PC-3 (cell line): ENCODE measurements at regions of chr5 and their contacts with region 1.

Region 1: GRCh38 chr5:144072518-144072927 is 97.9 kb downstream of the YIPF5 start:
- DNase-seq: peak; percentile 84
- ATAC-seq: peak; percentile 92
- H3K4me3 ChIP-seq: no peak overlapping the region
- H3K27ac ChIP-seq: peak overlapping the region; percentile 87
- H3K4me1 ChIP-seq: peaks cover 17% of the 10 kb centered on the region
- H3K27me3 ChIP-seq: no peaks in the 10 kb centered on the region
- CTCF ChIP-seq: no peak

Region 2: GRCh38 chr5:143923634-143924255 is 148.8 kb before region 1 on chr5:
- CTCF ChIA-PET with region 1: no interaction called
- POLR2A ChIA-PET with region 1: no interaction called
- intact Hi-C with region 1: loop called (anchors 5 kb)
- DNase-seq: peak; percentile 60
- ATAC-seq: peak; percentile 72
- H3K4me3 ChIP-seq: peak overlapping the region; percentile 43; the same call in 1 of the 2 replicates
- H3K27ac ChIP-seq: peak overlapping the region; percentile 95
- H3K4me1 ChIP-seq: peaks cover 53% of the 10 kb centered on the region
- H3K27me3 ChIP-seq: no peaks in the 10 kb centered on the region
- CTCF ChIP-seq: no peak

Region 3: GRCh38 chr5:143979044-143979690 is 93.4 kb before region 1 on chr5:
- CTCF ChIA-PET with region 1: no interaction called
- POLR2A ChIA-PET with region 1: interaction called, 4 read pairs
- intact Hi-C with region 1: loop called (anchors 2 kb)
- DNase-seq: peak; percentile 26
- ATAC-seq: no peak
- H3K4me3 ChIP-seq: no peak overlapping the region
- H3K27ac ChIP-seq: no peak overlapping the region
- H3K4me1 ChIP-seq: peaks cover 33% of the 10 kb centered on the region
- H3K27me3 ChIP-seq: no peaks in the 10 kb centered on the region
- CTCF ChIP-seq: no peak

Region 4: GRCh38 chr5:144040615-144041305 is 31.8 kb before region 1 on chr5:
- CTCF ChIA-PET with region 1: no interaction called
- POLR2A ChIA-PET with region 1: no interaction called
- intact Hi-C with region 1: no loop called
- DNase-seq: no peak
- ATAC-seq: no peak
- H3K4me3 ChIP-seq: no peak overlapping the region
- H3K27ac ChIP-seq: no peak overlapping the region
- H3K4me1 ChIP-seq: no peaks in the 10 kb centered on the region
- H3K27me3 ChIP-seq: no peaks in the 10 kb centered on the region
- CTCF ChIP-seq: no peak

Region 5: DNA sequence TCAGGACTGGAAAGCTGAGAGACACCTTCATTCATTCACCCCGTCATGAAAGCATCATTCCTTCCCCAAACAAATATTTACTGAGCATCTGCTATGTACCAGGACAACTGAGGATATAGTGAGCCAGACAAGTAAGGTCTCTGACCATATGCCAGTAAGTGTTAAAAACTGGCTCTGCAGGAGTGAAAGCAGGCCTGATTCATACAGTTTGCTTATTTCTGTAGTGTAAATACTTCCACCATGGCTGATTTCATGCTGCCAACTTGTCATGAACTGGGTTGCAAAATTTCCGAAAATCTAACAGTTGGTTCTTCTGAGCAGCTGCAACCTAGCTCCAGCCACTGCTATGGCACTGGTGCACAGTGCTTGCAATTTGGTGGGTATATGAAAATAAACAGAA is 29.8 kb after region 1 on chr5:
- CTCF ChIA-PET with region 1: no interaction called
- POLR2A ChIA-PET with region 1: no interaction called
- intact Hi-C with region 1: no loop called
- DNase-seq: peak; percentile 65
- ATAC-seq: peak; percentile 58
- H3K4me3 ChIP-seq: peak overlapping the region; percentile 30; the same call in 1 of the 2 replicates
- H3K27ac ChIP-seq: peak overlapping the region; percentile 95
- H3K4me1 ChIP-seq: peaks cover 38% of the 10 kb centered on the region
- H3K27me3 ChIP-seq: no peaks in the 10 kb centered on the region
- CTCF ChIP-seq: no peak

Region 6: GRCh38 chr5:144237851-144238250 is 165.3 kb after region 1 on chr5:
- CTCF ChIA-PET with region 1: no interaction called
- POLR2A ChIA-PET with region 1: no interaction called
- intact Hi-C with region 1: no loop called
- DNase-seq: no peak
- ATAC-seq: no peak
- H3K4me3 ChIP-seq: no peak overlapping the region
- H3K27ac ChIP-seq: no peak overlapping the region
- H3K4me1 ChIP-seq: no peaks in the 10 kb centered on the region
- H3K27me3 ChIP-seq: peaks cover 13% of the 10 kb centered on the region; the same call in 1 of the 2 replicates
- CTCF ChIP-seq: no peak

Region 7: DNA sequence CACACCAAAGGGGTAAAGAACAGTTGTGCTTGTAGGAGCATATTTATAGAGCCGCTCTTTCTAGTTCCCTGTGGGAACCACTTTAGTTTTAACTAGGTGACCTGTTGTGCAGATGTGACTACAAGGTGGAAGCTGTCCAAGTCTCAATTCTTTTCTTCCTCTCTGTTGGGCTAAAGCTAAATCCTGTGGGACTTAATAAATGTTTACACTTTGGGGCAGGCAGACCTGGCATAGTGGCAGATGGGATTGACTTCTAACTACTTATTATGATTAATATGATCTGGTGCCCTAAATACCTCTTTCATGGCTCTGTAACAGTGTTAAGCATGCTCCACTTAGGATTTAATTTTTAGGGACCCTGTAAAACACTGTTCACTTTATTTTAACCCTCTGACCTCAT is 363.5 kb after region 1 on chr5:
- CTCF ChIA-PET with region 1: no interaction called
- POLR2A ChIA-PET with region 1: no interaction called
- intact Hi-C with region 1: no loop called
- DNase-seq: no peak
- ATAC-seq: no peak
- H3K4me3 ChIP-seq: no peak overlapping the region
- H3K27ac ChIP-seq: no peak overlapping the region
- H3K4me1 ChIP-seq: no peaks in the 10 kb centered on the region
- H3K27me3 ChIP-seq: no peaks in the 10 kb centered on the region
- CTCF ChIP-seq: no peak